ENCODE measurements at regions of chr13 and their contacts with region 1.

Region 1: DNA sequence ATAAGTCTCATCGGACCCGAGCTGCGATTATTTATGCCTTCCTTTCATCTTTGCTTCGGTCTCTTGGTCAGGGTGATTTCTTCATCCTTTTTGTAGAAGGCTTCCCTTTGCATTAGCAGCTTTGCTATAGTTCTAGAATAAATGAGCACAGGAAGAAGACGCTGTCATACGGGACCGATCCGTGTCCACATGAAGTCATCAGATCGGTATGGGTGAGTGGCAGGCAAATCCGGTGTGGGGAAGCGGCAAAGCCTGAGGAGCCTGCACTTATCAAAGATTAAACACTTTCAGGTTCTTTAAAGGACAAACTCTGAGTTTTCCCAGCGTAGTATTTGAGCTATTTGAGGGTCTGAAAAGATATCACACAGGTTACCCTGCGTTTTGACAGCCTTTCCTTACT is 119.3 kb downstream of the IRS2 start:
- DNase-seq: peak; percentile 85
- H3K4me3 ChIP-seq: peak overlapping the region; percentile 22
- H3K27ac ChIP-seq: peak overlapping the region; percentile 97
- H3K4me1 ChIP-seq: peaks cover 53% of the 10 kb centered on the region
- H3K27me3 ChIP-seq: no peaks in the 10 kb centered on the region
- CTCF ChIP-seq: no peak

Region 2: GRCh38 chr13:109654341-109655205 is 12.5 kb before region 1 on chr13:
- CTCF ChIA-PET with region 1: interaction called, 6 read pairs
- POLR2A ChIA-PET with region 1: interaction called, 3 read pairs
- intact Hi-C with region 1: loop called (anchors 2 kb)
- DNase-seq: peak; percentile 63
- H3K4me3 ChIP-seq: no peak overlapping the region
- H3K27ac ChIP-seq: peak overlapping the region; percentile 94
- H3K4me1 ChIP-seq: peaks cover 67% of the 10 kb centered on the region
- H3K27me3 ChIP-seq: no peaks in the 10 kb centered on the region
- CTCF ChIP-seq: no peak

Region 3: GRCh38 chr13:109834973-109835720 is 168.1 kb after region 1 on chr13:
- CTCF ChIA-PET with region 1: no interaction called
- POLR2A ChIA-PET with region 1: no interaction called
- intact Hi-C with region 1: no loop called
- DNase-seq: no peak
- H3K4me3 ChIP-seq: no peak overlapping the region
- H3K27ac ChIP-seq: no peak overlapping the region
- H3K4me1 ChIP-seq: no peaks in the 10 kb centered on the region
- H3K27me3 ChIP-seq: peaks cover 24% of the 10 kb centered on the region
- CTCF ChIP-seq: no peak

Region 4: DNA sequence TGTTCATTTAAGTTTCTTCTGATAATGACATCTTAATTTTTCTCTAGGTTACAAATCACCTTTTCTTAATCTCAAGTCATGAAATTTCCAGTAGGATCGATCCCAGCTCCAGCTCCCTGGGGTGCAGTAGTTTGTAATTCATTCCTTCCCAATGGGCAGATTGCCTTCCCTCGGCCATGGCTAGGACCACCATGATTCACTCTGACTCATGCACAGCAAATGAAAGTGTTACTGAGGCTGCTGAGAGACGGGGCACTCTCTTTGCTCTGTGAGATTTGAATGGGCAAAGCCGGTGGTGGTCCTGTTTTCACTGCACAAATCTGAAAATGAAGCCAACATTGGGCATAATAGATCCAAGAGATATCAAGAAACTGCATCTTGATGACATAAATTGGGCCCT is 322.1 kb after region 1 on chr13:
- CTCF ChIA-PET with region 1: no interaction called
- POLR2A ChIA-PET with region 1: no interaction called
- intact Hi-C with region 1: no loop called
- DNase-seq: no peak
- H3K4me3 ChIP-seq: no peak overlapping the region
- H3K27ac ChIP-seq: no peak overlapping the region
- H3K4me1 ChIP-seq: no peaks in the 10 kb centered on the region
- H3K27me3 ChIP-seq: peaks cover 60% of the 10 kb centered on the region
- CTCF ChIP-seq: no peak

Region 5: DNA sequence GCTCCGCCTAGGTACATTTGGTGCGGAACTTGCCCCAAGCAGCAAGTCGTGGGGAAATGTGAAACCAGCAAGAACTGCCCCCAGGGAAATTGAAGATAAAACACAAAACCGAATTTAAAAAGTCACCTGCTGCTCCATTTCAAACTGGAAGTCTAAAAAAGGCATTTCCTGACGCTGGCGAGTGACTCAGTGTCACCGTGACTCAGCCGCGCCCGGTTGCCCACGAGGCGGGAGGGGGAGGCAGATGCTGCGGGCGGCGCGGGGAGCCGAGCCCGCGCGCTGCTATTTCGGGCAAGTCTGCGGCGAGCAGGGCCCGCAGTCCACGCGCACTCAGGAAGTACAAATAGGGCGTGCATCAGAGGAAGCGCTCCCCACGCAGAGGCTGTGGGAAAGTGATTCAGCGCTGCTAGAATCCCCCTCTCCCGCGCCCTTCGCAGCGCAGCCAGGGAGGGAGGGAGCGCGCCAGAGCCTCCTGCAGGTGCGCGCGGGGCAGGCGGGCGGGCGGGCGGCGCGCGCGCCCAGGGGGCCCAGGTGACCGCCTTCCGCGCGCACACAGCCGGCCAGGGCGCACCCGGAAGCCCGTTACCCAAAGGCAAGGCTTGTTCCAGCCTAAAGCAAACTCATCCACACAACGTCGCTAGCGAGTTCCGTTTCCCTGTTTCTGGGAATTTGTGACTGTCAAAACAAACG is 471.1 kb after region 1 on chr13:
- CTCF ChIA-PET with region 1: no interaction called
- POLR2A ChIA-PET with region 1: interaction called, 12 read pairs
- intact Hi-C with region 1: no loop called
- DNase-seq: peak; percentile 56
- H3K4me3 ChIP-seq: peak overlapping the region; percentile 58
- H3K27ac ChIP-seq: no peak overlapping the region
- H3K4me1 ChIP-seq: peaks cover 13% of the 10 kb centered on the region
- H3K27me3 ChIP-seq: no peaks in the 10 kb centered on the region
- CTCF ChIP-seq: no peak; the same call in 1 of the 2 replicates

Region 6: DNA sequence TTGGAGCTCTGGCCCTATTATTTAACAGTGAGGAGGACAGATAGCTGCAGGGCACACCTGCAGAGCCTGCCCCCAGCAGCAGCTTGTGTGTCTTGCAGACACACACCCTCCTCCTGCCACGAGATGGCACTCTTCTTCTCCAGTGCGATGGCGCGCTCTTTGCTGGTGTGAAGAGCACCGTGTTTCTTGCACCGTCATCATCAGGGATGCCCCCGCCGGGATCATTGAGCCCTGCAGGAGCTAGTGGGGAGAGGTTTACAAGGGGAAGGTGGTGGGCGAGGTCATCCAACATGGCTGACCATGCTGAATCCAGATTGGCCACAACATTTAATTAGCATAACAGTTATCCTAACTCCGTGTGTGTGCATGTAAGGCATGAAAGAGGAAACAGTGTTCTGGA is 788.9 kb after region 1 on chr13:
- CTCF ChIA-PET with region 1: interaction called, 11 read pairs
- POLR2A ChIA-PET with region 1: no interaction called
- intact Hi-C with region 1: no loop called
- DNase-seq: peak; percentile 91
- H3K4me3 ChIP-seq: no peak overlapping the region
- H3K27ac ChIP-seq: peak overlapping the region; percentile 2
- H3K4me1 ChIP-seq: no peaks in the 10 kb centered on the region
- H3K27me3 ChIP-seq: no peaks in the 10 kb centered on the region
- CTCF ChIP-seq: peak; percentile 94

Measured in A673 (cell line).